Activated CD4-positive, alpha-beta T cell treated with anti-CD3 and anti-CD28 coated beads for 36 hours (primary cell): ENCODE measurements at regions of chr2 and their contacts with region 1.

Region 1: DNA sequence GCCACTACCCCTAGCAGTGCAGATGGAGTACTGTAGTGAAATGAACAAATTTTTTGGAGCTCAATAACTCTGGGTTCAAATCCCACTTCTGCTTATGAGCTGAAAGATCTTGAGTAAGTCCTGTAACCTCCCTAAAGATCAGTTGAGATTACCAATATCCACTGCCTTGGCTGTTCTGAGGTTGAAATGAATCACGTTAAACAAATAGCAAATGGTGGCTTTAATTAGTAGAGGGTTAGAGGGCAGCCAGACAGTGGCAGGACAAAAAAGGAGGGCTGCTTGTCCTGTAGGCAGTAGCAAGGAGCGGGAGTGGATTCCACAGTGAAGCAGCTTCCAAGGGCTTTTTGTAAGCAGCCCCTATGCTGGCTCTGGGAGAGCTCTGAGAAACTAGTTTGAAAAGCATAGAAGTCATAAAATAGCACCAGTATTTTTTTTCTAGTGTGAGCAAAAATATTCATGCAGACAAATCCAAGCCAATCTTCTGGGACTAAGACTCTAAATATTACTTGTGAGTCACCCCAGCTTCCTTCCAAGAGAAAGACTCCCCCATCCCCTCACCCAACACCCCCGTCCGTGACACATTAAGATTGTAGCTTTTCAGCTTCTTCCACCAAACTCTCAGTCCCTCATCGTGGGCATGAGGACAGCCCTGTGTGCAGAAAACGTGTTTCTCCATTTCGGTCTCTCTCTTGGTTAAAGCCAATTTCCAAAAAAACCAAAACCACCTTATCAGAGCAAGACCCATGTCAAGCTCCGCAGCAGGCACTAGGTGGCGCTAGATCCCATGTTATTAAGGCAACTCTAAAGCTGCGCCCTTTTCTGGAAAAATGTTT is 123.5 kb upstream of the LGALSL start:
- DNase-seq: peak; percentile 87
- ATAC-seq: no peak
- H3K4me3 Mint-ChIP-seq: peak overlapping the region; percentile 8
- H3K27ac Mint-ChIP-seq: no peak overlapping the region
- H3K4me1 Mint-ChIP-seq: peaks cover 48% of the 10 kb centered on the region
- H3K27me3 Mint-ChIP-seq: no peaks in the 10 kb centered on the region

Region 2: DNA sequence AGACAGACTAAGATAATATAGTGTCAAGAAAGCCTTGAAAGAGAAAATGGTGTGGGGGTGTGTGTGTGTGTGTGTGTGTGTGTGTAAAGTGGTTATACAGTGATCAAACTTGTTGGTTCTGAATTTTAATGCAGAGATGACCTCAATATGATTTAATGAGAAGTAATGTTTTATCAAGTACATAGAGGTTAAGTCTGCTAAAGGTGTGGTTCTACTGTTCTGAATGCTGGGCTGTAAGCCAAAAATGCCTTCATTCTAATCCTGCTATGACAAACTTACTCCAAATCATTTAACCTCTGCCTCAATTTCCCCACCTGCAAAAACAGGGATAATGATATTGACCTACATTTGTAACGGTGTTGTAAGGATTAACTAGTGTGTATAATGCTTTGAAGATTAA is 830.1 kb before region 1 on chr2:
- CTCF ChIA-PET with region 1: no interaction called
- POLR2A ChIA-PET with region 1: no interaction called
- intact Hi-C with region 1: no loop called
- DNase-seq: no peak
- ATAC-seq: no peak
- H3K4me3 Mint-ChIP-seq: no peak overlapping the region
- H3K27ac Mint-ChIP-seq: no peak overlapping the region
- H3K4me1 Mint-ChIP-seq: peaks cover 2% of the 10 kb centered on the region
- H3K27me3 Mint-ChIP-seq: no peaks in the 10 kb centered on the region

Region 3: DNA sequence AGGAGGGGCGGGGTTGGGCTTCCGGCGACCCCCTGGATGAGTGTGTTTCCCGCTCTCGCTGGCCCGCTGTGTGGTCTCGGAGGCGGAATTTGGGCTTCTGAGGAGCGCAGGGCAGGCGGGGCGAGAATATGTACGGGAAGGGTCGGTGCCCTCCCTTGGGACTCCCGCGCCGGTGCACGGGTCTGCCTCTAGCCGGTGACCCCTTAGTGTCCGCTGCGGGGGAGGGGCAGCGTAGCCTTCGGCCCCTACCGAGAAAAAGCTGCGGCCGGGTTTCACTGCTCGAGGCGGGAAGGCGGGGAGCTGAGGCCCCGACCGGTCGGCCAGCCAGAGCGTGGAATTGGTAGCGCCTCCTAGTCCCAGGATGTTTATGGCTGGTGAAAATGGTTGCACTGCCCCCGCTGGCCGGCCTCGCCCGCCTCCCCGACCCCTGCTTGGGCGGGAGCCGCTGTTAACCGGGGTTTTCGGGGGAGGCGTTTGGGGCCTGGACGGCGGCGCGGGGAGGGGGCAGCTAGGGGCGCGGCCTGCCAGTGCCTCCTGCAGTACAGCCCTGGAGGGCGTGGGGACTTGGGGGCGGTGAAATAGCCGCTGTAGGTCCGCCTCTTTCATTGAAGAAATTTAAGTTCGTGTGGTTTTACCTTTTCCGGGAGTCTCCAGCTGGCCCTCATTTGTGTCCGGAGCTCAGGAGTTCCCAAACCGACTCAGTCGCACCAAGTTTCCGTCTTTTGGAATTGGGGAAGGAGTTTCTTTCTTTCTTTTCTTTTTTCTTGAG is 489.1 kb before region 1 on chr2 and contains the start of gene UGP2:
- CTCF ChIA-PET with region 1: interaction called, 3 read pairs
- POLR2A ChIA-PET with region 1: interaction called, 3 read pairs
- intact Hi-C with region 1: loop called in 1 of 2 experiments (anchors 1 kb)
- DNase-seq: peak; percentile 91
- ATAC-seq: peak; percentile 72
- H3K4me3 Mint-ChIP-seq: peak within 1 kb of the TSS; percentile 92
- H3K27ac Mint-ChIP-seq: peak within 1 kb of the TSS; percentile 98
- H3K4me1 Mint-ChIP-seq: peaks cover 39% of the 10 kb centered on the region
- H3K27me3 Mint-ChIP-seq: no peaks in the 10 kb centered on the region
- total RNA-seq, gene UGP2: 98.4 to 144 TPM

Region 4: DNA sequence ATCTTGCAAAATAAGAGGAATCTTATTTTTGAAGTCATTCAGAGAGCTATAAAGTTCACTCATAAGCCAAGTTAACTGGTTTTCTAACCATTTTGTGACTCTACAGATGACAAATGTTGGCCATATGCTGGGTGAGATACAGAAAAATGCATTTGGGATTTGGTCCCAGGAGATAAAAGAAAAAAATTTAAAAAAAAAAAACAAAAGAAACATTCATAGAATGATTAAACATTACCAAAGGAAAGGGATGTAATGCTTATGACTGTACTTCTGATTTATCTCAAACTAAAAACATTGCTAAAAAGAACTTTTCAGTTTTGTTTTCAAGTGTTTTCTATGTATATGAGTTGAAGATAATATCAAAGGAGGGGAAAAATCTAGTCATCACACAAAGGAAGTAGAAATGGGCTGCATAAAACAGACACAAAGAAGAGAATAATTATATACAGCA is 229.3 kb before region 1 on chr2:
- CTCF ChIA-PET with region 1: interaction called, 7 read pairs
- POLR2A ChIA-PET with region 1: interaction called, 7 read pairs
- intact Hi-C with region 1: loop called (anchors 1 kb)
- DNase-seq: no peak
- ATAC-seq: peak; percentile 86
- H3K4me3 Mint-ChIP-seq: peak overlapping the region; percentile 3
- H3K27ac Mint-ChIP-seq: peak overlapping the region; percentile 51
- H3K4me1 Mint-ChIP-seq: peaks cover 54% of the 10 kb centered on the region
- H3K27me3 Mint-ChIP-seq: no peaks in the 10 kb centered on the region

Region 5: DNA sequence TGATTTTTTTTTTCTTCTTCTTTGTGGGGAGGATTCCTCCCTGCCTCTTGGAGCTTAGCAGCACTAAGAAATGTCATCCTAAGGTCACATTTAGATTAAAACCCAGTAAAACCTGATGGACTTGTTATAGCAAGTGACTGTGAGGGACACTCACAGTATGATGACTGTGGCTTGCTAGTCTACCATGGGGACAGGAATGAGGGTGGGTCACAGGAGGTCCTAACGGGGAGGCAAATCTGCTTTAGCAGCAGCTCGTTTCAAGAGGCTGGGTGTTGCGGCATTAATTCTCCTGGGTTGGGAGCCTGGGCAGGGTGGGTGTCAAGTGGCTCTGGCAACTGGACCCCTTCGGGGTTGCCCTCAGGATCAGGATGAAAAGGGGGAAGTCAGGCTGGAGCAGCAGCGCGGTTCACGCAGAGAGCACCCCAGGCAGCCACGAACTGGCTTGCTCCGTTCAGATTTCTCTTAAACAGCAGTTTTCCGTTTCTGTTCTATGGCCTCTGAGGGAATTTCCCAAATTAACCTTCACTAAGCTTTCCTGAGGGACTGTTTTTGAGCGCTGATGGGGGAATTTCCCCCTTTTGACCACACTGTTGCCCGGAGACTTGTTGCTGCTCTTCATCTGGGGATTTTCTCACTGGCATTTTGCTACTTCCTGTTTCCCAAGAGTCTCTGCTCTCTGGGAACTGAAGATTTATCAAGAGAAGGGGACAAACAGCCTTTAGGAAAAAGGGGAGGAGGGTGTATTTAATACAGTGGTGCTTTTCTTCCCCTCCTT is 126.5 kb before region 1 on chr2:
- CTCF ChIA-PET with region 1: interaction called, 7 read pairs
- POLR2A ChIA-PET with region 1: no interaction called
- intact Hi-C with region 1: loop called in 1 of 2 experiments (anchors 2 kb)
- DNase-seq: peak; percentile 59
- ATAC-seq: peak; percentile 53
- H3K4me3 Mint-ChIP-seq: peak overlapping the region; percentile 65
- H3K27ac Mint-ChIP-seq: peak overlapping the region; percentile 93
- H3K4me1 Mint-ChIP-seq: peaks cover 72% of the 10 kb centered on the region
- H3K27me3 Mint-ChIP-seq: no peaks in the 10 kb centered on the region

Region 6: DNA sequence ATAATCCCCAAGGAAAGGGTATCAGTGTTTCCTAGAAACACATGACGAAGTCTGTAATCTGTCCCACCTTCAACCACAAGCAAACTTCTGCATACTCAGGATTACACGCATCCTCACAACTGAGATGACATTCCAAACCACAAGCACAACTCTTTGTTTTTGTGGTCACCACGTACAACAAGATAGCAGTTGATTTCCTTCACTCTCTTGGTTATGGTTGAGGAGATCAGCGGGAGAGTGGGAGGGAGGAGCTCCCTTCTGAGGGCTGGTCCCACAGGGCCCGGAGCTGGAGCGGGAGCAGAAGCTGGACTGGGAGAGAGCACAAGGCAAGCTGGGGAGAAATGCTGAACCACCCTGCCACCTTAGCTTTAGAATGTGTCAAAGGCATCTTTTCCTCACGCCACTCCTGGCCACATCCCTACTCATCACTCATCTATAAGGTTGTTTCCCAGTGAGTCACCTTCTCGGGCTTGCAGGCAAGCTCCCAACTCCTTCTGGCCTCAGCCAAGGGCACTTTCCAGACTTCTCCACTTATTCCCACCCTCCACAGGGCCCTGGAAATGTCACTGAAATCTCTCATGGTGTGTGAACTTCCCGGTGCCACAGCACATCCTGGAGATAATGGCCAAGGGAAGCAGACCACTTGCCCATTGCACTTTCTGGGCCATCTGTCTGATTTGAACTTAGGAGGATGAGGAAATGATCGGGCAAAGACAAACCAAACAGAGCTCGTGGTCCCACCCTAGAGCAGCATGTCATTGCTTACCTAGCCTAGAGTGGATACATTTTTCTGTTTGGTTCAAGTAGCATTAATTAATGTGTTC is 24.6 kb after region 1 on chr2:
- CTCF ChIA-PET with region 1: interaction called, 11 read pairs
- POLR2A ChIA-PET with region 1: no interaction called
- intact Hi-C with region 1: no loop called
- DNase-seq: no peak
- ATAC-seq: no peak
- H3K4me3 Mint-ChIP-seq: no peak overlapping the region
- H3K27ac Mint-ChIP-seq: no peak overlapping the region
- H3K4me1 Mint-ChIP-seq: peaks cover 8% of the 10 kb centered on the region
- H3K27me3 Mint-ChIP-seq: peaks cover 25% of the 10 kb centered on the region

Region 7: DNA sequence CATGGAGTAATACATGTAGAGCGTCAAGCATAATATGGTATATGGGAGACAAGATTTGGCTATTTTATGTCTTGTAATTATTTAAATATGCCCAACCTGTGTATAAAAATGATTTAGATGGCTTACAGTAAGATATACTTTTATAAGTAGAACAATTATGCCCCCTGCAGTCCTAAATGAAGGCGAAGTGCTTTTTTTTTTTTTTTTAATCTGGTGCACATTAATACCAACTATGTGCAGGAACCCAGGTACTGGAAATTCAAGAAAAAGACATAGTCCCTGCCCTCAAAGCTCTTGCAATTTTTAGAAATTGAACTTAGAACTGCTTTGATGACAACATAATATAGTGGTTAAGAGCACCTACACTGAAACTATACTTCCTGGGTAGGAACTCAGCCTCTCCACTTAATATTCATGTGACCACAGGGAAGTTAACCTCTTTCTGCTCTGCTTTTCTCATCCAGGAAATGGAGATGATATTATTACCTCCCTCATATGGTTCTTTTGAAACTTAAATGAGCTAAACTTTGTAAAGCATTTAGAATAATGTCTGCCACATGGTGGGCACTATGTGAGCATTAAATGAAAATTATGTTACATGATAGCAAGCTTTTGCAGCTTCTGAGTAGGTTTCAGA is 231.8 kb after region 1 on chr2:
- CTCF ChIA-PET with region 1: interaction called, 15 read pairs
- POLR2A ChIA-PET with region 1: no interaction called
- intact Hi-C with region 1: loop called (anchors 2 kb)
- DNase-seq: no peak
- ATAC-seq: peak; percentile 44
- H3K4me3 Mint-ChIP-seq: no peak overlapping the region
- H3K27ac Mint-ChIP-seq: no peak overlapping the region
- H3K4me1 Mint-ChIP-seq: peaks cover 57% of the 10 kb centered on the region
- H3K27me3 Mint-ChIP-seq: no peaks in the 10 kb centered on the region

Region 8: GRCh38 chr2:65031341-65032018 is 701.0 kb after region 1 on chr2:
- CTCF ChIA-PET with region 1: no interaction called
- POLR2A ChIA-PET with region 1: no interaction called
- intact Hi-C with region 1: no loop called
- DNase-seq: no peak
- ATAC-seq: peak; percentile 59
- H3K4me3 Mint-ChIP-seq: no peak overlapping the region
- H3K27ac Mint-ChIP-seq: peak overlapping the region; percentile 56
- H3K4me1 Mint-ChIP-seq: peaks cover 23% of the 10 kb centered on the region
- H3K27me3 Mint-ChIP-seq: no peaks in the 10 kb centered on the region